ENCODE measurements at regions of chr11 and their contacts with region 1.

Region 1: DNA sequence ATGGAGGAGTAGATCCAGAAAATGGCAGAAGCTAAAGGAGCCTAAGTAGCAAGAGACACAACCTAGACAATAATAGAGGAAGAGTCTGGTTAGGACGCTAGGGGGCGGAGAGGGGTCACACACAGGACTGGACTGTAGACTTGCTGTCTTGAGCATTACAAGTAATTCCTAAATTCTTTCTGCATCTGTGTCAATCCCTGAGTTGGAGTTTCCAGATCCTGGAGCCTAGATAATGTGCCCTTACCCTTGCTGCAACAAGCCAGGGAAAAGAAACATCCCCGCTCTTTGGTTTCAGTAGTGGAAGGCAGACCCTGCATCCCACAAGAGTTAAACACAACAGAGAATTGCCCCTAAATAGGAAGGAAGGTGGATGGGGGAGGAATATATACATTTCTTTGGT is 14.9 kb upstream of the CCDC73 start:
- DNase-seq: peak; percentile 82
- ATAC-seq: peak; percentile 86
- H3K4me3 Mint-ChIP-seq: no peak overlapping the region
- H3K27ac Mint-ChIP-seq: no peak overlapping the region
- H3K4me1 Mint-ChIP-seq: no peaks in the 10 kb centered on the region
- H3K27me3 Mint-ChIP-seq: no peaks in the 10 kb centered on the region
- CTCF ChIP-seq: peak; percentile 64

Region 2: DNA sequence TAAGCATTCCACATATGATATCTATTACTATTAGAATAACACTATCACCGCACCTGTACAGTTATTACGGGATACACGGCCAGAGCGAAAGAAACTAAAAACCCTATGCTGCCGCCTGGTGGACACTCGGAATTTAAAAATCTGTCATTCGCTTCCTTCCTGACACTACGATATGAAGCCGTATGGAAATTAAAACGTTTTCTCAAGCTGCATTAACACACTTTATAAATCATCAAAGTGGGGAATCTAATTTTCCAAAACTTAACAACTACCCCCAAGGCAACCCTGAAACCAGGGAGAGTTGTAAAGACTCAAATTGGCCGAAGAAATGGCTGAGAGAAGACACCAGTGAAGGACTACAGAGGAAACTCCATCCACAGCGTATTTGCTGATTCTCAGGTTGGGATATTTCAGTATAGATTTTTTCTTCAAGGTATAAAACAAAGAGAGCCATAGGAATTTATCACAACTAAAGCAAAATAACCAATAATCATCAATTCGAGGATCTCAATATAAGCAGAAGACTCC is 16.3 kb before region 1 on chr11:
- CTCF ChIA-PET with region 1: interaction called, 18 read pairs
- POLR2A ChIA-PET with region 1: no interaction called
- intact Hi-C with region 1: no loop called
- DNase-seq: peak; percentile 83
- ATAC-seq: peak; percentile 74
- H3K4me3 Mint-ChIP-seq: no peak overlapping the region
- H3K27ac Mint-ChIP-seq: no peak overlapping the region
- H3K4me1 Mint-ChIP-seq: peaks cover 9% of the 10 kb centered on the region
- H3K27me3 Mint-ChIP-seq: peaks cover 8% of the 10 kb centered on the region
- CTCF ChIP-seq: peak; percentile 96

Region 3: GRCh38 chr11:32893343-32894148 is 84.2 kb after region 1 on chr11:
- CTCF ChIA-PET with region 1: interaction called, 12 read pairs
- POLR2A ChIA-PET with region 1: no interaction called
- intact Hi-C with region 1: no loop called
- DNase-seq: peak; percentile 70
- ATAC-seq: peak; percentile 64
- H3K4me3 Mint-ChIP-seq: peak overlapping the region; percentile 83
- H3K27ac Mint-ChIP-seq: peak overlapping the region; percentile 98
- H3K4me1 Mint-ChIP-seq: peaks cover 38% of the 10 kb centered on the region
- H3K27me3 Mint-ChIP-seq: no peaks in the 10 kb centered on the region
- CTCF ChIP-seq: peak; percentile 27